AG04450 (cell line): ENCODE measurements at regions of chr4 and their contacts with region 1.

Region 1: DNA sequence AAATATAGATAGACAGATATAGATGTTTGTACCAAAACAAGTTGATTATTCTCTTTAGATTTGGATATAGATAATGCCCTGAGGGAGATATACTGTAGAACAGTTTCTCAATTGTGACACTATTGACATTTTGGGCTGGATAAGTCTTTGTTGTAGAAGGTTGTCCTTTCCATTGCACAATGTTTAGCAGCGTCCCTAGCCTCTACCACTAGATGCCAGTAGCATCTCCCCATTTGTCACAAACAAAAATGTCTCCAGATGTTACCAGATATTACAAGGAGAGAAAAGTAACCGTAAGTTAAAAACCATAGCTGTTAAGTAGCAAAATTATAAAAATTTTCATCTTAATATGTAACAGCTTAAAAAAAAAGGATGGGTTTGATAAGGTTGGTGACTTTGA is 2595.3 kb downstream of the ARAP2 start:
- DNase-seq: no peak
- H3K4me3 ChIP-seq: no peak overlapping the region
- H3K27ac ChIP-seq: no peak overlapping the region
- H3K27me3 ChIP-seq: no peaks in the 10 kb centered on the region
- CTCF ChIP-seq: peak; percentile 68

Region 2: DNA sequence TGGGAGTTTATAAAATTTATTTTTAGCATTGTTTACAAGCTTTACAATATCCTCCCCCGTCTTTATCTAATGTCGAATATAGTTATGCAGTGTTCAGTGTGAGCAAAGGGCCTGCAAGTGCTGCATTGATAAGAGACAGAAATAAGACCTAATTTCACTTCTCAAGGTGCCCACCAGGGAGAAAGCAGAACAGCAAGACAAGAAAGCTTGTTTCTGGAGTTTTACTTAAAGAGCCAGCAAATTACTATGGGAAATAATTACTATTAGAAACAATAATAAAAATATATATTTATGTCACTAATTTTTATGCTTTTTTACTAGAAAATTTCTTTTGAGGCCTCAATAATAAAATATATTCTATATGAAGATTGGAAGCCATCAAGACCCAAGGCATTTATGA is 82.4 kb before region 1 on chr4:
- CTCF ChIA-PET with region 1: no interaction called
- POLR2A ChIA-PET with region 1: no interaction called
- DNase-seq: no peak
- H3K4me3 ChIP-seq: no peak overlapping the region
- H3K27ac ChIP-seq: no peak overlapping the region
- H3K27me3 ChIP-seq: no peaks in the 10 kb centered on the region
- CTCF ChIP-seq: no peak

Region 3: DNA sequence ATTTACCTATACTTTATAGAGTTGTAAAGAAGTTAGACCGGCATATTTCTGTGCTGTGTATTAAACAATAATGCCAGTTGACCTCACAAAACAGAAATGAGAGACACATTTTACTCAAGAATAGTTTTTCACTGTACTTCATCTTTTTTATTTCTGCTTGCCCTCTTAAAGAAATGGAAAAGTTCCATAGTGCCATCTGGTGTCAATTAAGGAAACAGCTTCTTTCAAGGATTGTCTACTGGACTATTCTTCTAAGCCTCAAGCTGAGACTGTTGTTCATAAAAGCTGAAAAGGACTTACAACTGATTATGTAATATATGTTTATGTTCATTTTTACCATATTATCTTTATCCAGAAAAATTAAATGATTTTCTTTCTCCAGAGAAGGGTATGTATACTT is 1071.6 kb after region 1 on chr4:
- CTCF ChIA-PET with region 1: interaction called, 13 read pairs
- POLR2A ChIA-PET with region 1: no interaction called
- DNase-seq: no peak
- H3K4me3 ChIP-seq: no peak overlapping the region
- H3K27ac ChIP-seq: no peak overlapping the region
- H3K27me3 ChIP-seq: no peaks in the 10 kb centered on the region
- CTCF ChIP-seq: peak; percentile 42